Activated CD8-positive, alpha-beta T cell treated with anti-CD3 and anti-CD28 coated beads for 36 hours (primary cell): ENCODE measurements at regions of chr10 and their contacts with region 1.

Region 1: GRCh38 chr10:26448706-26449435 is 10.7 kb downstream of the APBB1IP start:
- DNase-seq: peak; percentile 85
- ATAC-seq: peak; percentile 48
- H3K4me3 Mint-ChIP-seq: peak overlapping the region; percentile 54
- H3K27ac Mint-ChIP-seq: peak overlapping the region; percentile 94
- H3K4me1 Mint-ChIP-seq: peaks cover 86% of the 10 kb centered on the region
- H3K27me3 Mint-ChIP-seq: no peaks in the 10 kb centered on the region
- CTCF ChIP-seq: no peak

Region 2: DNA sequence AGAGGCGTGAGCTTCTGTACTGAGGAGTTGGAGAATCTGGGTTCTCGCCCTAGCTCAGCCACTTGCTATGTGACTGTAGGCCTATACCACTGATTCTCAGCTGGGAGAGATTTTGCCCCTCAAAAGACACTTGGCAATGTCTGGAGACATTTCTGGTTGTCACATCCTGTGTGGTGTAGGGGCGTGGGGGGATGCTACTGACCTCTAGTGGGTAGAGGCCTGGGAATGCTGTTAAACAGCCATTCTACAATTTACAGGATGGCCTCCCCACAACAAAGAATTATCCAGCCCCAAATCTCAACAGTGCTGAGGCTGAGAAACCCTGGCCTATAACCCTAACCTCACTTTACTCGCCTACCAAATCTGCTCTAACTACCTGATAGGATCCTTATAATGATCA is 291.1 kb before region 1 on chr10:
- CTCF ChIA-PET with region 1: no interaction called
- POLR2A ChIA-PET with region 1: no interaction called
- intact Hi-C with region 1: no loop called
- DNase-seq: no peak
- ATAC-seq: no peak
- H3K4me3 Mint-ChIP-seq: no peak overlapping the region
- H3K27ac Mint-ChIP-seq: no peak overlapping the region
- H3K4me1 Mint-ChIP-seq: no peaks in the 10 kb centered on the region
- H3K27me3 Mint-ChIP-seq: peaks cover 5% of the 10 kb centered on the region
- CTCF ChIP-seq: no peak

Region 3: DNA sequence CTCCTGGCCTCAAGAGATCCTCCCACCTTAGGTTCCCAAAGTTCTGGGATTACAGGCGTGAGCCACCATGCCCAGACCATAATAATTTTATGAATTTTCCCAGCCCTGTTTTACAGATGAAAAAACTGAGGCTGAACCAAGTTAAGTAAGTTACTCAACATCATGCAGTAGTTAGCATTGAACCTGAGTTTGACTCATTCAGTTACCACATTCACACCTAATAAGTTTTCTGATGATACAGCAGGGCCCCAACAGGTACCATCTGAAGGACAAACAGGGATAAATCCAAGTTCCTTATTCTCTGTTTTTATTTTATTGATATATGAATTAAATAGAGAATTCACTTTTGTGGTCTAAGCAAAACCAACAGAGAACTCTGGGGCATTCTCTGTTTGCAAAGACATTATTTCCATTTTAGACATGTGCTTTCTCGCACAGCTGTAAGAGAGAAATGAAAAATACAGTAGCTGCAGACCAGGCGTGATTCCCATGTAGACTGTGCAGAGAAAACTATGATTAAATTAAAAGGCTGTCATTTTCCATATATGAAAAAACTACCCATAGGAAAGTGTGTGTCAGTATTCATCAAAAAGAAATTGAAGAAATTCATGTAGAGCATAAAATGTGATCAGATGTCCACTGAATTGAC is 15.9 kb after region 1 on chr10:
- CTCF ChIA-PET with region 1: interaction called, 3 read pairs
- POLR2A ChIA-PET with region 1: interaction called, 8 read pairs
- intact Hi-C with region 1: loop called (anchors 2 kb)
- DNase-seq: no peak
- ATAC-seq: peak; percentile 38
- H3K4me3 Mint-ChIP-seq: no peak overlapping the region
- H3K27ac Mint-ChIP-seq: peak overlapping the region; percentile 70
- H3K4me1 Mint-ChIP-seq: peaks cover 82% of the 10 kb centered on the region
- H3K27me3 Mint-ChIP-seq: no peaks in the 10 kb centered on the region
- CTCF ChIP-seq: no peak

Region 4: DNA sequence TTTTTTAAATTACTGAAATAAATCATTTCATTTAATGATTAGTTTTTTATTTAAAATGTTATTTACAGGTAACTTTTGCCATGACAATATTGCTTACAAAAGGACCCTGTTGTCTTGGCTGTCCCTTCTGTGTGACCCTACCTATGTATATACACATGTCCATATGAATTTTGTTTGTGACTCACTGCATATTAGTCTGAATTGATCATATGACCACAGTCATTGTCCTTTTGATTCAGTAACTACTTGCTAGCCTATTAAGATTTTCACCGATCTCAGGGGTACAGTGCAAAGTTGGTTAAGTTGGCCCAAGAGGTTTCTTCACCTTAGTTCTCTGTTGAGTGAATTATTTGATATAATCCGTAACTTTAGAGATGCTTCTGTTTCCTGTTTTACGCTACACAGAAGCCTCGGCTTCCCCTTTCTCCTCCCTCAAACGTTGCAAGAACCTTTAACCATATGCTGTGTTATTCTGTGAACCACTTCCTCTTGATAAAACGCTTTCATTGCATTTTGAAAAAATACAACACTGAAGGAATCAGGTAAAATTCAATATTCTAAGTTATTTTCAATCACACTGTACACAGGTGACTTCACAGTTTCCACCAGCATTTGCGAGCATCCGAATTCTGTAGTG is 33.2 kb after region 1 on chr10:
- CTCF ChIA-PET with region 1: interaction called, 10 read pairs
- POLR2A ChIA-PET with region 1: interaction called, 3 read pairs
- intact Hi-C with region 1: loop called (anchors 1 kb)
- DNase-seq: peak; percentile 45
- ATAC-seq: peak; percentile 44
- H3K4me3 Mint-ChIP-seq: peak overlapping the region; percentile 72
- H3K27ac Mint-ChIP-seq: peak overlapping the region; percentile 94
- H3K4me1 Mint-ChIP-seq: peaks cover 75% of the 10 kb centered on the region
- H3K27me3 Mint-ChIP-seq: no peaks in the 10 kb centered on the region
- CTCF ChIP-seq: no peak

Region 5: DNA sequence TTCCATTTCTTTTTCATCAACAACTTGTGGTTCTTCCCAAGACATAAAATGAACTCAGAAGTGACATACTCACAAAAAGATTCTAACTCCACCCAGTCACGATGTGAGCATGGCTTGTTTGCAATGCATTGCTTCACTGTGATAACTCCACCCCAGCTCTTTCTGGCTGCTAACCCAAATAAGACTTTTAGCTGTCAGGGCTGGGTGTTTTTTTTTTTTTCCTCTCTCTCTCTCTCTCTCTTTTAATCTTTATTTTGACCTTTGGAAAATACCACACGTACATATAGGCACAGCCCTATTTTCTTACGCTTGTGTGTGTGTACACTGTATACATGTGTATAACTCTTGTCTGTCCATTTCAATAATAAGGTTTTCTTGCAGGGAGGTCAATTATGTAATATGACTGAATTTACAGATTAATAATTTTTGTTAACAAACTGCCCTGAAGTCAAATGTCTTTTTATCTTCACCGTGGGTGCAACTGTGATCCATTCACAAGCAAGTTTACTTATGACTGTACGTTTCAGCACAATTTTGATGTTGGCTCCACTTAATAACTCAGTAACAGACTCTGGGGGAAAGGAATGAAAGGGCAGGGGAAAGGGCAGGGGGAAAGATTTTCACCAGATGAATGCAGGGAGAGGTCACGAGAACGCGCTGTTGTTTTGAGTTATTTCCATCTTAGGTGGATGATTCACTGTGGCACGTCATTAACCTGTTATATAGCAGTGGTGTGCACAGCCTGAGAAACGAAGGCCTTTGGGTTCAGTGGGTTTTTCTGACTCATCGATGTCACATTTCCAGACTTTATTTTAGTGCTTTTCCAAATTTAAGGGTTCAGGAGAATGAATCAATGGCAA is 38.4 kb after region 1 on chr10:
- CTCF ChIA-PET with region 1: interaction called, 4 read pairs
- POLR2A ChIA-PET with region 1: interaction called, 3 read pairs
- intact Hi-C with region 1: loop called (anchors 1 kb)
- DNase-seq: peak; percentile 90
- ATAC-seq: peak; percentile 83
- H3K4me3 Mint-ChIP-seq: peak overlapping the region; percentile 64
- H3K27ac Mint-ChIP-seq: peak overlapping the region; percentile 96
- H3K4me1 Mint-ChIP-seq: peaks cover 74% of the 10 kb centered on the region
- H3K27me3 Mint-ChIP-seq: no peaks in the 10 kb centered on the region
- CTCF ChIP-seq: no peak